Ascending aorta (tissue), 2 donors: ENCODE measurements at regions of chr2 and their contacts with region 1.

Region 1: DNA sequence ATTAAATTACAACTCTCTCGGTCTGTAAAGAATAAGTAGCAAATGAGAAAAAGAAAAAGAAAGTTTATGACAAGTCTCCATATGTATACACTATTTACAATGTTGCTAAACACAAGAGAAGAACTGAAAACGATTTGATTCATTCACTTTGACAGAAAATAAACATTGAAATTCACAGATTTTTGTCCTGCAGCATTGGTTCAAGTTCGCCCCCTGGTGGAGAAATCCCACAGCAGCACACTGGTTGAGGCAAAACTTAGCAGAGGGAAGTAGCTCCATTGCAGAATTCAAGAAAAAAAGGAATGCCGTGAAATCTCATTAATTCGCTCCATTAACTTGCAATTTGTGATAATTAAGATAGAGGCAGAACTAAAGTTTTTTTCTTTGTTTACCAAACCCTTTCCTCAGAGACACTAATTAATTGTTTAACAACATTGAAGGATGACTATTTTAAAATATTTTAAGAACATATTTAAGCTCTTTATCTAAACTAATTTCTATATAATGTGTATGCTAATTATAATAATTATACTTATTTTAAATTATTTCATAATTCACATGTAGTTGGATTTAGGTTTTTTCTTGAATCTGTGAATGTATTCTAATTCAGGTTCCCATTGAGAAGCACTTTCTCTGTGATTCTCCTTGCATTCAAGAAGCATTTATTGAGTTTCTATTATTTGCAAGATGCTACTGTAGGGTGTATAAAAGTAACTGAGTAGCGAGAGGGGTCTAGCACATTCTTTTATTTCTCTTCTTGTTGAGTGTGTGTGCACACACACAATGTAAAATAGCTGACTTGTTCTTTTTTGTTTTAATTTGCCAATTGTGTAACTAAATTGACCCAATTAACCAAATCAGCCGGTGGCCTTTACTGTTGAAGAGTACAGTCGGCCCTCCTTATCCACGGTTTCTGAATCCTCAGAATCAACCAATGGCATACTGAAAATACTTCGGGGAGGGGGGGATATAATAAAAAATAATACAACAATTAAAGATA is 74.1 kb downstream of the COL4A3 start:
- DNase-seq: peak in 1 of 2 donors; percentile 84
- H3K4me3 ChIP-seq: no peak overlapping the region
- H3K27ac ChIP-seq: no peak overlapping the region
- H3K4me1 ChIP-seq: no peaks in the 10 kb centered on the region
- H3K27me3 ChIP-seq: no peaks in the 10 kb centered on the region
- CTCF ChIP-seq: peak; percentile 64 to 97 (median 86)

Region 2: DNA sequence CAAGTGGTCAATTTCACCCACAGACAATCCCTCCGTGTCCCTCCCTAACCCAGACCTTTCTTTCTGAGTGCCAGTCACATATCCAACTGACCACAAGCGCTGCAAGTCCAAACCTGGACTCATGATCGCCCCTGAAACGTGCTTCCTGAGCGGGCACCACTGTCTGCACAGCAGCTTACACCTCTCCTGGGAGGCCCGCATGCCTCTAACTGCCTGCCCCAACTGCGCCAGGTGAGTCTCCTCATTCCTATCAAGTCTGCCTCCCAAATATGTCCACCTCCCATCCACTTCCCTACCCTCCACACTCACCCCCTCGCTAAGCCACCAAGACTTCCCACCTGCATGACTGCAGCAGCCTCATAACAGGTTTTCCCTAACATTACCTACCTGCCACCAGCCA is 107.9 kb before region 1 on chr2:
- intact Hi-C with region 1: loop called (anchors 1 kb)
- DNase-seq: no peak
- H3K4me3 ChIP-seq: no peak overlapping the region
- H3K27ac ChIP-seq: no peak overlapping the region
- H3K4me1 ChIP-seq: no peaks in the 10 kb centered on the region
- H3K27me3 ChIP-seq: no peaks in the 10 kb centered on the region
- CTCF ChIP-seq: no peak

Region 3: GRCh38 chr2:227360351-227360750 is 121.8 kb after region 1 on chr2:
- intact Hi-C with region 1: no loop called
- DNase-seq: no peak
- H3K4me3 ChIP-seq: no peak overlapping the region
- H3K27ac ChIP-seq: no peak overlapping the region
- H3K4me1 ChIP-seq: peaks cover 0 to 8% of the 10 kb centered on the region in 2 donors
- H3K27me3 ChIP-seq: no peaks in the 10 kb centered on the region
- CTCF ChIP-seq: no peak